B cell (primary cell): ENCODE measurements at regions of chr2 and their contacts with region 1.

Region 1: DNA sequence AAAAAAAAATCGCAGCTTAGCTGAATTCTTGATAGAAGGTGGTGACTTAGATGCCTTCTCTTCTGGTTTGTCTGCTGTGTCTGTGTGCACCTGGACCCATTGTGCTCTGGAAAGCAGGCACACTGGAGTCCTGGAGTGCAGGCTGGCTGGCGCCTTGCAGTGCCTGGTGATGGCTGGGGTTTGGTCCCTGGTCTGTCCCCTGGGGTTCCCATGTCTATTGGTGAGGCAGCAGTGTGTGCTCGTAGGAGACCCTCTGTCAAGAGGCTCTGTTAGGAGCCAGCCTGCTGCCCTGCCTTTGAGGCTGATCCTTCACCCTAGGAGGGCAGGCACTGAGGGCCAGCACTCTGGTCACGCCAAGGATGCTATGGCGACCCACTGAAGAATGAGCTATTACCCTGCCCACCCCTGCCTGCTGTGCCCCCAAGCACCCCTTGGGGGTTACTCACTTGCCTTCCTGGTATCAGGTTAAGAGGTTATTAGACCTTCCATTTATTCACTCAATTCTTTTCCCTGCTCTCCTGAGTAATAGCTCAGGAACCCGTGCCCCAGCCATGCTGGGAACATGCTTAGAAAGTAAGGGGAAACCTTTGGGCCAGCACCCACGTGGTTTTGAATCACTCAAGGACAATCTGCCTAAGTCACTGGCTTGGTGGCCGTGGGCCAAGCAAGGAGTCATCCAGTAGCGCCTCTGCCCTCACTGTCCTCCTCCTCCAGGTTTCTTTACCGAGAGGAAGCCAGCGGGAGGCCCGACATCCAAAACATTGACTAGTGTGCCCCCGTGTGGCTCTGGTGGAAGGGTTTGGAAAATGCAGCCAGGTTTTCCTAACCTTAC is 284.5 kb downstream of the PRKCE start:
- DNase-seq: peak; percentile 74
- ATAC-seq: peak; percentile 64
- H3K4me3 ChIP-seq: no peak overlapping the region
- H3K4me3 Mint-ChIP-seq: no peak overlapping the region
- H3K27ac ChIP-seq: no peak overlapping the region
- H3K27ac Mint-ChIP-seq: no peak overlapping the region
- H3K4me1 ChIP-seq: peaks cover 6 to 10% of the 10 kb centered on the region in 2 donors
- H3K4me1 Mint-ChIP-seq: peaks cover 18% of the 10 kb centered on the region
- H3K27me3 ChIP-seq: no peaks in the 10 kb centered on the region
- H3K27me3 Mint-ChIP-seq: no peaks in the 10 kb centered on the region
- CTCF ChIP-seq: peak; percentile 60

Region 2: GRCh38 chr2:45545943-45546342 is 390.1 kb before region 1 on chr2:
- CTCF ChIA-PET with region 1: no interaction called
- POLR2A ChIA-PET with region 1: no interaction called
- intact Hi-C with region 1: no loop called
- DNase-seq: no peak
- ATAC-seq: no peak
- H3K4me3 ChIP-seq: no peak overlapping the region
- H3K4me3 Mint-ChIP-seq: no peak overlapping the region
- H3K27ac ChIP-seq: no peak overlapping the region
- H3K27ac Mint-ChIP-seq: no peak overlapping the region
- H3K4me1 ChIP-seq: no peaks in the 10 kb centered on the region
- H3K4me1 Mint-ChIP-seq: no peaks in the 10 kb centered on the region
- H3K27me3 ChIP-seq: no peaks in the 10 kb centered on the region
- H3K27me3 Mint-ChIP-seq: no peaks in the 10 kb centered on the region
- CTCF ChIP-seq: no peak

Region 3: DNA sequence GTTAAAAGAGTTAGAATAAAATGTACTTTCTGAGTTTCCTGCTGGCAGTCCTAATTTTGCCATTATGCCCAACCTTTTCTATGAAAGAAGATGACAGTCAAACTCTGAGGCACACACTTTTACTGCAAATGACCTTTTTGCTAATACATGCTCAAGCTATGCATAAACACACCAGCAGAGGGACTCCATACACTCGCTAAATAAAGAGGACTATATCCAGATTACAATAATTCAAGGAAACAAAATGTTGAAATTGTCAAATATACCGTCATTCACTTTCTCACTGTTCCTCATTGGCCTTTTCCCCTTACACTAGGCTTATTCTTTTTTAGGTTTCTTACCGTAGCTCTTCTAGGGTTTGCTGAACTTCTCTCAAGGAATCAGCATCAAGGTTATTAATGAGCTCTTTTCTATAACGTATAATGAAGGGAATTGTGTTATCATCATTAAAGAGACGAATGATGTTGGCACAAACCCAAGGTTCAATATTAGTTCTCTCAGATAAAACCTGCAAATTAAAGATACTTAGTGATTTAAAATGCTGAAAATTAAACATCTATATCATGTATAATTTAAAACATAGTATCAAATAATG is 350.6 kb before region 1 on chr2:
- CTCF ChIA-PET with region 1: interaction called, 13 read pairs
- POLR2A ChIA-PET with region 1: no interaction called
- intact Hi-C with region 1: no loop called
- DNase-seq: peak; percentile 52
- ATAC-seq: peak; percentile 43
- H3K4me3 ChIP-seq: no peak overlapping the region
- H3K4me3 Mint-ChIP-seq: no peak overlapping the region
- H3K27ac ChIP-seq: no peak overlapping the region
- H3K27ac Mint-ChIP-seq: no peak overlapping the region
- H3K4me1 ChIP-seq: no peaks in the 10 kb centered on the region
- H3K4me1 Mint-ChIP-seq: peaks cover 14% of the 10 kb centered on the region
- H3K27me3 ChIP-seq: no peaks in the 10 kb centered on the region
- H3K27me3 Mint-ChIP-seq: no peaks in the 10 kb centered on the region
- CTCF ChIP-seq: peak; percentile 78

Region 4: GRCh38 chr2:45643543-45644542 is 292.2 kb before region 1 on chr2:
- CTCF ChIA-PET with region 1: interaction called, 35 read pairs
- POLR2A ChIA-PET with region 1: no interaction called
- intact Hi-C with region 1: loop called (anchors 1 kb)
- DNase-seq: peak; percentile 86
- ATAC-seq: peak; percentile 96
- H3K4me3 ChIP-seq: peak overlapping the region in 4 of 5 experiments; percentile 35 to 54 (median 51)
- H3K4me3 Mint-ChIP-seq: peak overlapping the region; percentile 83
- H3K27ac ChIP-seq: peak overlapping the region in 1 of 2 donors; percentile 54
- H3K27ac Mint-ChIP-seq: no peak overlapping the region
- H3K4me1 ChIP-seq: peaks cover 13 to 19% of the 10 kb centered on the region in 2 donors
- H3K4me1 Mint-ChIP-seq: peaks cover 17% of the 10 kb centered on the region
- H3K27me3 ChIP-seq: peaks cover 0 to 16% (median 6%) of the 10 kb centered on the region in 4 experiments
- H3K27me3 Mint-ChIP-seq: peaks cover 29% of the 10 kb centered on the region
- CTCF ChIP-seq: peak; percentile 89